WTC11 (cell line): ENCODE measurements at regions of chr3 and their contacts with region 1.

Region 1: GRCh38 chr3:134212906-134213665 is 37.6 kb downstream of the RYK start:
- DNase-seq: peak; percentile 93
- ATAC-seq: peak; percentile 92
- H3K4me3 Mint-ChIP-seq: no peak overlapping the region
- H3K27ac Mint-ChIP-seq: peak overlapping the region; percentile 88
- H3K4me1 Mint-ChIP-seq: peaks cover 3% of the 10 kb centered on the region; the same call in 1 of the 2 replicates
- H3K27me3 Mint-ChIP-seq: no peaks in the 10 kb centered on the region
- CTCF ChIP-seq: peak; percentile 98

Region 2: GRCh38 chr3:133930341-133930933 is 282.6 kb before region 1 on chr3:
- CTCF ChIA-PET with region 1: interaction called, 17 read pairs
- POLR2A ChIA-PET with region 1: no interaction called
- DNase-seq: no peak
- ATAC-seq: peak; percentile 25; the same call in 1 of the 2 replicates
- H3K4me3 Mint-ChIP-seq: no peak overlapping the region
- H3K27ac Mint-ChIP-seq: no peak overlapping the region
- H3K4me1 Mint-ChIP-seq: peaks cover 11% of the 10 kb centered on the region
- H3K27me3 Mint-ChIP-seq: peaks cover 22% of the 10 kb centered on the region
- CTCF ChIP-seq: no peak

Region 3: DNA sequence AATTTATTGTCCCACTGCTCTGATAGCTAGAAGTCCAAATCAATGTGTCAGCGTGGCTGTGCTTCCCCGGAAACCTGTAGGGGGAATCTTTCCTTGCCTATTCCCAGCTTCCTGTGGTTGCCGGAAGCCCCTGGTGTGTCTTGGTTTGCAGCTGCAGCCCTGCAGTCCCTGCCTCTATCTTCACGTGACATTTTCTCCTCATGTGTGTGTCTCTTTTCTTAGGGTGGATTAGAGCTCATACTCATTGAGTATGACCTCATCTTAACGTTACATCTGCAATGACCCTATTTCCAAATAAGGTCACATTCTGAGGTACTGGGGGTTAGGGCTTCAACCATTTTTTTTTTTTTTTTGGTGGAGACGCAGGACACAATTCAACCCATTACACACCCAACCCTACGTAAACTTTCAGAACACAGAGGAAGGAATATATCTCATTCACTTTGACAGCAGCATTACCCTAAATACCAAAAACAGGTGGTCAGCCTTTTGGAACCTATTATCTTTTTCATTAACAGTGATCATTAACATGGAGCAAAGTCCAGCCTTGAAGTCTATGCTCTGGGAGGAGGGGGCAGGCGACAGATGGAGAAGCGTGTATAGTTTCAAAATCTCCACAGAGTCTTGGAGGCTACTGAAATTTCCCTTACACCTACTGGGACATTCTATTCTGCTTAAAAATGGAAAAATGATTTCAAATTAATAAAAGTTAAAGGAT is 51.0 kb before region 1 on chr3:
- CTCF ChIA-PET with region 1: interaction called, 11 read pairs
- POLR2A ChIA-PET with region 1: no interaction called
- DNase-seq: peak; percentile 45
- ATAC-seq: peak; percentile 96
- H3K4me3 Mint-ChIP-seq: no peak overlapping the region
- H3K27ac Mint-ChIP-seq: peak overlapping the region; percentile 33; the same call in 1 of the 2 replicates
- H3K4me1 Mint-ChIP-seq: peaks cover 12% of the 10 kb centered on the region; the same call in 1 of the 2 replicates
- H3K27me3 Mint-ChIP-seq: no peaks in the 10 kb centered on the region
- CTCF ChIP-seq: no peak

Region 4: DNA sequence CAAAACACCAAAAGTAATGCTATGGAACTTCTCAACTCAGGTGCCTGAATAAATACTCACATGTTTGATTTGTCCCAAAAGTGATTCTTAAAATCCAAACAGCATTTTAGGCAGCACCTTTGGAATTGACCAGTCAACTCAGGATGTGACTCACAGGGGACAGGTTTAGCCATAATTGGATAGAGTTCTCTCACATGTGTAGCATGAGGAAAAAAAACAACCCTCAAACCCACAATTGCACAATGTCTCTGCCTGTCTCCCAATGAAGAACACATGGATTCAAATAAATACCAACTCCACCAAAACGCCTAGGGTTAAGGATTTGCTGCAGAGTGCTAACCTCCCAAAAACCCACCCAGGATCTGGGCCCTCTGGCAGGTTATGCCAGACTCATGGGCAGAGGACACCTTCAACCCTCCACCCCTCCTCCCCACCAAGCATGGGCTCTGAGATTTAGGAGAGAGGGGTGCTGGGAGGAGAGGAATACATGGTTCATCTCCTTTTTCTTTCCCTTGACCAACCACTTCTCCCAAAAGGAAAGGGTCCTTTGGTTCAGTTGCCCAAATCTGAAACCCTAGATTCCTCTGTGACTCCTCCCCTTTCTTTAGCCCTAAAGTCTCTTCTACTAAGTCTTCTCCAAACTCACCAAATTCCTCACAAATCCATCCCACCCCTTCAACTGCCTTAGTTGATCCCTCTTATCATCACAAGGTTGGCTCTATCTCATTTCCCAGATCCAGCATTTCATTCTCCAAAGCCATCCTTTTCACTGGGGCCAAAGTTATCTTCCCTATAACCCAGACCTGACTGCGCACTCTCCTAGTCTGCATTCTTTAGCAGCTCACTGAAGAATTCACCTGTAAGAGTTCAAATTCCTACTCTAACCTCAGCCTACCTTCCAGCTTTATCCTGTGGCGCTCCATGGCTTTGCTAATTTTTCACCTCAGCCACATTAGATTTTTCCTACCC is 29.8 kb after region 1 on chr3:
- CTCF ChIA-PET with region 1: interaction called, 14 read pairs
- POLR2A ChIA-PET with region 1: no interaction called
- DNase-seq: no peak
- ATAC-seq: peak; percentile 63
- H3K4me3 Mint-ChIP-seq: no peak overlapping the region
- H3K27ac Mint-ChIP-seq: peak overlapping the region; percentile 81
- H3K4me1 Mint-ChIP-seq: peaks cover 65% of the 10 kb centered on the region
- H3K27me3 Mint-ChIP-seq: no peaks in the 10 kb centered on the region
- CTCF ChIP-seq: no peak

Region 5: GRCh38 chr3:134299185-134299887 is 86.2 kb after region 1 on chr3:
- CTCF ChIA-PET with region 1: interaction called, 60 read pairs
- POLR2A ChIA-PET with region 1: no interaction called
- DNase-seq: no peak
- ATAC-seq: peak; percentile 76
- H3K4me3 Mint-ChIP-seq: no peak overlapping the region
- H3K27ac Mint-ChIP-seq: no peak overlapping the region
- H3K4me1 Mint-ChIP-seq: peaks cover 2% of the 10 kb centered on the region; the same call in 1 of the 2 replicates
- H3K27me3 Mint-ChIP-seq: no peaks in the 10 kb centered on the region
- CTCF ChIP-seq: no peak